OCI-LY7 (cell line): ENCODE measurements at regions of chr19 and their contacts with region 1.

Region 1: GRCh38 chr19:21020298-21021227 is at the start of gene ZNF430:
- DNase-seq: peak; percentile 99
- H3K4me3 ChIP-seq: peak within 1 kb of the TSS; percentile 97
- H3K27ac ChIP-seq: peak within 1 kb of the TSS; percentile 73
- H3K4me1 ChIP-seq: peaks cover 21% of the 10 kb centered on the region
- CTCF ChIP-seq: no peak
- total RNA-seq, gene ZNF430: 14.0 and 28.7 TPM in 2 replicates

Region 2: GRCh38 chr19:20923077-20923871 is 97.3 kb before region 1 on chr19 and contains the start of gene ZNF85:
- CTCF ChIA-PET with region 1: no interaction called
- POLR2A ChIA-PET with region 1: no interaction called
- intact Hi-C with region 1: loop called (anchors 5 kb)
- DNase-seq: peak; percentile 97
- H3K4me3 ChIP-seq: peak within 1 kb of the TSS; percentile 85
- H3K27ac ChIP-seq: peak within 1 kb of the TSS; percentile 88
- H3K4me1 ChIP-seq: peaks cover 15% of the 10 kb centered on the region
- CTCF ChIP-seq: no peak
- total RNA-seq, gene ZNF85: 26.5 and 27.1 TPM in 2 replicates

Region 3: DNA sequence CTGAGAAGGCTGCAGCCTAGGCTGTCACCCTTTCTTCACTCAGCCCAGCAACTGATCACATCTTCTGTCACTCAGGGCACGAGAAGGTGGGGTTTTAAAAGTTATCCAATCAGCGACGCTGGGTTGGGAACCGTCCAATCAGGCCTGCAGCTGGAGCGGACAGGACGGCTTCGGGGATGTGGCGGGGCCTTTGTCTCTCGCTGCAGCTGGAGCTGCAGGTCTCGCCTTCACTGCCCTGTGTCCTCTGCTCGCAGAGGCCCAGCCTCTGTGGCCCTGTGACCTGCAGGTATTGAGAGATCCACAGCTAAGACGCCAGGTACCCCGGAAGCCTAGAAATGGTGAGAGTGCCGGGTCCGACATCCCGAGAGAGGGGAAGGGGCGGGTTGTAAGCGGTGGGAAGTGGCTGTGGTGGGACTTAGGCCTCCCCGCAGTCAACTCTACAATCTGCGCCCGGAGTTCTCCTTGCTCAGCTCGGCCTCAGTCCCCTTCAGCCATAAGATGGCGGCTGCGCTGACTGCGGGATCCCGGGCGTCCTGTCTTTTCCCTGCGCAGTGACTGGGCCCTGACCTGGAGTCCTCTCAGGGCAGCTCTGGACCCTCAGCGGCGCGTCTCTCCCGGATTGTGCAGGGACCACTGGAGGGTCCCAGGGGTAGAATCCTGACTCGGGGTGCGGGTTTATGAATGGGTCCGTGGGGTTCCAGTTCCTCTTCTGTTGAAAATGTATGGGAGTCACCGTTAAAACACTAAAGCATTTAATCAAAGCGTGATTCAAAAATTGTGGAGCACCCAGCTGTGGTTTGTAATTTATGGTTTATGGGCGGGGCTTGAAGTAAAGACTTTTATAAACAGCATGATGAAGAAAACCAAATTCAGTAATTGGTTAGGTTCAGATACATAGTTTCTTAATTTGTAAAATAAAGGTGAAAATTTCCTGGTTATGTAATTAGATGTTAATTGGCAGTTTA is 61.7 kb after region 1 on chr19 and contains the start of gene ZNF714:
- CTCF ChIA-PET with region 1: no interaction called
- POLR2A ChIA-PET with region 1: no interaction called
- intact Hi-C with region 1: loop called (anchors 5 kb)
- DNase-seq: peak; percentile 97
- H3K4me3 ChIP-seq: peak within 1 kb of the TSS; percentile 87
- H3K27ac ChIP-seq: peak within 1 kb of the TSS; percentile 66
- H3K4me1 ChIP-seq: peaks cover 13% of the 10 kb centered on the region
- CTCF ChIP-seq: no peak
- total RNA-seq, gene ZNF714: 39.6 and 46.4 TPM in 2 replicates

Region 4: DNA sequence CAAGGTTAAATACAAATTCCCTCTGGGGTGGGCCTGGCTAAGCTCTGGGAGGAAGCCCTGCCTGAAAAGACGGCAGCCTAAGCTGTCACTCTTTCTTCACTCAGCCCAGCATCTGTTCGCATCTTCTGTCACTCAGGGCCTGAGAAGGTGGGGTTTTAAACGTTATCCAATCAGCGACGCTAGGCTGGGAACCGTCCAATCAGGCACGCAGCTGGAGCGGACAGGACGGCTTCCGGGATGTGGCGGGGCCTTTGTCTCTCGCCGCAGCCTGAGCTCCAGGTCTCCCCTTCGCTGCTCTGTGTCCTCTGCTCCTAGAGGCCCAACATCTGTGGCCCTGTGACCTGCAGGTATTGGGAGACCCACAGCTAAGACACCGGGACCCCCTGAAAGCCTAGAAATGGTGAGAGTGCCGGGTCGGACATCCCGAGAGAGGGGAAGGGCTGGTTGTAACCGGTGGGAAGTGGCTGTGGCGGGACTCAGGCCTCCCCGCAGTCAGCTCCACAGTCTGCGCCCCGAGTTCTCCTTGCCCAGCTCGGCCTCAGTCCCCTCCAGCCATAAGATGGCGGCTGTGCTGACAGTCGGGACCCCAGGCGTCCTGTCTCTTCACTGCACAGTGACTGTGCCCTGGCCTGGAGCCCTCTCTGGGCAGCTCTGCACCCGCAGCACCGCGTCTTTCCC is 121.4 kb after region 1 on chr19 and contains the start of gene ZNF431:
- CTCF ChIA-PET with region 1: no interaction called
- POLR2A ChIA-PET with region 1: no interaction called
- intact Hi-C with region 1: loop called (anchors 5 kb)
- DNase-seq: peak; percentile 96
- H3K4me3 ChIP-seq: peak within 1 kb of the TSS; percentile 92
- H3K27ac ChIP-seq: peak within 1 kb of the TSS; percentile 59
- H3K4me1 ChIP-seq: peaks cover 8% of the 10 kb centered on the region
- CTCF ChIP-seq: no peak
- total RNA-seq, gene ZNF431: 11.9 and 26.6 TPM in 2 replicates

Region 5: GRCh38 chr19:21362291-21362690 is 341.7 kb after region 1 on chr19:
- CTCF ChIA-PET with region 1: no interaction called
- POLR2A ChIA-PET with region 1: no interaction called
- intact Hi-C with region 1: no loop called
- DNase-seq: no peak
- H3K4me3 ChIP-seq: no peak overlapping the region
- H3K27ac ChIP-seq: no peak overlapping the region
- H3K4me1 ChIP-seq: peaks cover 13% of the 10 kb centered on the region
- CTCF ChIP-seq: no peak